T-cell (primary cell): ENCODE measurements at regions of chr11 and their contacts with region 1.

Region 1: GRCh38 chr11:62340269-62340901 is 3.1 kb downstream of the ASRGL1 start:
- DNase-seq: peak; percentile 13 to 75 (median 50)
- ATAC-seq: peak; percentile 41 to 47 (median 45)
- H3K4me3 ChIP-seq: no peak overlapping the region
- H3K4me3 Mint-ChIP-seq: peak overlapping the region in 1 of 3 donors; percentile 13
- H3K27ac ChIP-seq: no peak overlapping the region
- H3K27ac Mint-ChIP-seq: no peak overlapping the region
- H3K4me1 ChIP-seq: peaks cover 0 to 13% of the 10 kb centered on the region in 2 experiments
- H3K4me1 Mint-ChIP-seq: peaks cover 9 to 18% (median 9%) of the 10 kb centered on the region in 3 donors
- H3K27me3 ChIP-seq: peaks cover 0 to 11% of the 10 kb centered on the region in 2 experiments
- H3K27me3 Mint-ChIP-seq: peaks cover 0 to 21% of the 10 kb centered on the region in 2 donors

Region 2: DNA sequence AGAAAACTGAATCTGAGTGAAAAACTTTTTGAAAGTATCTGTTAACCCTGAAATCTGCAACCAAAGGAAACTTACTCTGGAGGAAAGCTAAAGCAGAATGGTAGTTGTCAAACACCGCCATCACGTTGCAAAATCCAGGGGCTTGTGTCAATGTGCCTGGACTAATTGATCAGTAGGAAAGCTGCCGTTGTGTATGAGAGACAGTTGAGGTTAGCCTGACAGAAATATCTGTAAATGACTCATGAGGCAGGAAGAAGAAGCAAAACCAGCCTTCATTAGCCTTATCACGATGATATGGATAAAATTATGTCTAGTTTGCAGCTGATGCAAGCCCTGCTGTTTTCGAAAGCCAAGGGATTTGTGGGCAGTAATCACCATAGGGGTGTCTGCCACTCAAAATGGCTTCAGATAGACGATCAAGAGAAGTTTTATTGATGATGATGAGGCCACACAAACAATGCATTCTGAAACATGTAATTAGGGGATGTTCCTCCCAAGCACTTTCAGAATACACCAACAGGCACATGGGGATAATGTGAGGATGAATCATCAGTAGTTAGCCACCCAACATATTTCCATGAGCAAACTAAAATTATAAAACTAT is 87.3 kb after region 1 on chr11:
- CTCF ChIA-PET with region 1: no interaction called
- POLR2A ChIA-PET with region 1: no interaction called
- DNase-seq: no peak
- ATAC-seq: peak in 1 of 4 experiments; percentile 17
- H3K4me3 ChIP-seq: no peak overlapping the region
- H3K4me3 Mint-ChIP-seq: peak overlapping the region; percentile 8 to 60 (median 21)
- H3K27ac ChIP-seq: peak overlapping the region; percentile 16
- H3K27ac Mint-ChIP-seq: peak overlapping the region; percentile 55 to 91
- H3K4me1 ChIP-seq: peaks cover 16 to 24% of the 10 kb centered on the region in 2 experiments
- H3K4me1 Mint-ChIP-seq: peaks cover 30 to 67% (median 49%) of the 10 kb centered on the region in 3 donors
- H3K27me3 ChIP-seq: peaks cover 0 to 5% of the 10 kb centered on the region in 2 experiments
- H3K27me3 Mint-ChIP-seq: no peaks in the 10 kb centered on the region

Region 3: GRCh38 chr11:62444236-62444833 is 104.0 kb after region 1 on chr11:
- CTCF ChIA-PET with region 1: no interaction called
- POLR2A ChIA-PET with region 1: no interaction called
- DNase-seq: peak in 17 of 35 experiments; percentile 8 to 37 (median 14)
- ATAC-seq: peak in 2 of 4 experiments; percentile 42 to 55
- H3K4me3 ChIP-seq: peak overlapping the region in 1 of 2 donors; percentile 34
- H3K4me3 Mint-ChIP-seq: peak overlapping the region; percentile 69 to 77 (median 70)
- H3K27ac ChIP-seq: no peak overlapping the region
- H3K27ac Mint-ChIP-seq: no peak overlapping the region
- H3K4me1 ChIP-seq: peaks cover 0 to 10% of the 10 kb centered on the region in 2 experiments
- H3K4me1 Mint-ChIP-seq: peaks cover 7 to 16% (median 13%) of the 10 kb centered on the region in 3 donors
- H3K27me3 ChIP-seq: peaks cover 0 to 43% of the 10 kb centered on the region in 2 experiments
- H3K27me3 Mint-ChIP-seq: peaks cover 10 to 19% of the 10 kb centered on the region in 2 donors

Region 4: DNA sequence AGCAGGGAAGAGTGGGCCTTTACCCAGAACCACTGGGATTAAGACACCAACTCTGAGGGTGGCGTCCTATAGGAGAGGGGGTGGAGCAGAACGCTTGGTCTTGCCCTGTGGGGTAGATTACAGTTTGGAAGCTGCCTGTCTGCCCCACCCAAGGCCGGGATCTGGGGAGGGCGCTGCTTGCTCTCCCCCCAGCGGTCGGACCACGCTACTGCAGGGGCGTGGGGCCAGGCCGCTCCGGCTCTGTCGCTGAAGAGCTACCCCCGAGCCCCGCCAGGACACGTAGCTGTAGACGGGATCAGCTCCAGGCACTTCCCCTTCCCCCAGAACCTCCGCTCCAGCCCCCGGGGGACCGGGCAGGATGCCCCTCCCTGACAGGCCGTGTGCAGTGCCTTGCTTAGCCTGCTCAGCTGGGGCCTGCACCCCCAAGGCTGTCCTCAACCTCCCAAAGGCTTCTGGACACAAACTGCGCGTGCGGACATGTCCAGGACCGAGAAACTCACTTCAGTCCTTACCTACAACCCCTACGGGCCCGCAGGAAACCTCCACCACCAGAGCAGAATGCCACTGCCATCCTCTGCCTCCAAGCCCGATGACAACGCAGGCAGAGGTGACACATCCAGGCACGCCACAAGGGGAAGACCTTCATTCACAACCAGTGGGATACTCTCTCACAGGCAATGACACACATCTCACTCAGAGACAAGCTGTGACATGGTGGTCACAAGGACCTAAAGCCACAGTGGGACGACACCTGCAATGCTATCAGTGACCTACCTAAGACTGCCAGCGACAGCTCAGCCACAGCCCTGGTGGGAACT is 202.6 kb after region 1 on chr11:
- CTCF ChIA-PET with region 1: interaction called in 1 of 2 experiments, 13 read pairs
- POLR2A ChIA-PET with region 1: no interaction called
- DNase-seq: peak; percentile 39 to 81 (median 62)
- ATAC-seq: peak; percentile 36 to 59 (median 42)
- H3K4me3 ChIP-seq: peak overlapping the region in 1 of 2 donors; percentile 95
- H3K4me3 Mint-ChIP-seq: peak overlapping the region; percentile 91 to 96 (median 92)
- H3K27ac ChIP-seq: peak overlapping the region; percentile 95
- H3K27ac Mint-ChIP-seq: peak overlapping the region; percentile 84 to 85
- H3K4me1 ChIP-seq: peaks cover 14 to 92% of the 10 kb centered on the region in 2 experiments
- H3K4me1 Mint-ChIP-seq: peaks cover 65 to 77% (median 75%) of the 10 kb centered on the region in 3 donors
- H3K27me3 ChIP-seq: no peaks in the 10 kb centered on the region
- H3K27me3 Mint-ChIP-seq: no peaks in the 10 kb centered on the region